ENCODE measurements at regions of chr15 and their contacts with region 1.

Region 1: DNA sequence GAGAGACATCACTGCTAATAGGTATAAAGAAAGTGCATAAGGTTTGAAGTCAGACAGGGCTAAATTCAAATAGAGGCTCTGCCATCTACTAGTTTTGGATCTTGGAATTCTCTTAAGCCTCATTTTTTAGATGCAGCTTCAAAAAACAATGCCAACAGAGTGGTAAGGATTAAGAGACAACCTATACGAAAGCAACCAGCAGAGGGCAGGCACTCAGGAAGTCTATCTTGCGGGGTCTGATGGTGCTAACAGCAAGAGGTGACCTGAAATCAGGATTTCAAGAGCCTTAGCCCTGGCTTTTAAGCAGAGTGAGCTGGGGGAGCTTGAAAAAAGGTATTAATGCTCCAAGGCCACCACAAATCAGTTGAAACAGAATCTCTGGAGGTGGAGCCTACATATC is 40.7 kb downstream of the LDHAL6B start:
- DNase-seq: peak; percentile 74
- ATAC-seq: peak; percentile 93
- H3K4me3 ChIP-seq: no peak overlapping the region
- H3K27ac ChIP-seq: no peak overlapping the region
- H3K4me1 ChIP-seq: no peaks in the 10 kb centered on the region
- H3K27me3 ChIP-seq: no peaks in the 10 kb centered on the region
- CTCF ChIP-seq: peak; percentile 59
- POLR2A ChIP-seq: no peak
- RAD21 ChIP-seq: peak; percentile 76

Region 2: DNA sequence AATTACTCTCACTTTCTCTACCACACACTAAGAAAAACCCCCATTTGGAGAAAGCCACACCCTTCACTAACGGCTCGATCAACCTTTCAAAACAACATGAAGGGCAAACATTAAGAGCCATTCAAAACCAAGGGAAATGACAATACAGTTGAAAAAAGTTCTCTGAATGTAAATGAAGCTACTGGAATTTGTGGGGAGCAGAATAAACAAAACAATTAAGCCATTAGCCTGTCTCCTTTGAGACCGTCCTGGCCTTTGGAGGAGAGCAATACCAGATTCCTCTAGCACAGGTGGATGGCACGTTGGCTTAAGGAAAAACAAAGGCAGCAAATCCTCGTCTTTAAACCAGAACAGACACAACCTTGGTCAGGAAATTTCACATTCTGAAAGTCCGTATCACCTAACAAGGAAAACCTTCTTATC is 106.6 kb after region 1 on chr15:
- CTCF ChIA-PET with region 1: no interaction called
- POLR2A ChIA-PET with region 1: no interaction called
- dilution Hi-C with region 1: no loop called
- in situ Hi-C with region 1: no loop called
- intact Hi-C with region 1: no loop called
- DNase-seq: no peak
- ATAC-seq: no peak
- H3K4me3 ChIP-seq: no peak overlapping the region
- H3K27ac ChIP-seq: no peak overlapping the region
- H3K4me1 ChIP-seq: no peaks in the 10 kb centered on the region; the same call in 1 of the 2 replicates
- H3K27me3 ChIP-seq: no peaks in the 10 kb centered on the region
- CTCF ChIP-seq: no peak
- POLR2A ChIP-seq: no peak
- RAD21 ChIP-seq: no peak

Region 3: DNA sequence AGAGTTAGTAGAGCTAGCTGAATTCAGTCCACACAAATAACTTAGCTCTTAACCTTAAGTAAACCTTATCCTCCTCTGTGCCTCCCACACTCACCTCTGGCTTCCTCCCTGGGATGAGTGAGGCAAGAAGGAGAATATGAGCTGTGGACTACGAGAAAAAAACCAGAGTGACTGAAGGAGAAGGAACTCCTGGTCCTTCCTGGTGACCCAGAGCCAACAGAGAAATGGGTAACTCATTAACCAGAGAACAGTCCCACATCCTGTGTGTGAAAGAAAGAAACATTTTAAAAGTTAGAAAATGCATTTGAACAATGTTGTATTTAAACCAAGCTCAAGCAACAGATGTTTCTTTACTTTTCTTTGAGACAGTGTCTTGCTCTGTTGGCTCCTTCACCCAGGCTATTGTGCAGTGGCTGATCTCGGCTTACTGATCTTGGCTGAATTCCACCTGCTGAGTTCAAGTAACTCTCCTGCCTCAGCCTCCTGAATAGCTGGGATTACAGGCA is 163.1 kb after region 1 on chr15:
- CTCF ChIA-PET with region 1: interaction called, 7 read pairs
- POLR2A ChIA-PET with region 1: no interaction called
- dilution Hi-C with region 1: no loop called
- in situ Hi-C with region 1: no loop called
- intact Hi-C with region 1: loop called (anchors 1 kb)
- DNase-seq: no peak
- ATAC-seq: no peak
- H3K4me3 ChIP-seq: no peak overlapping the region
- H3K27ac ChIP-seq: no peak overlapping the region
- H3K4me1 ChIP-seq: no peaks in the 10 kb centered on the region
- H3K27me3 ChIP-seq: peaks cover 12% of the 10 kb centered on the region
- CTCF ChIP-seq: no peak
- POLR2A ChIP-seq: no peak
- RAD21 ChIP-seq: no peak